ENCODE measurements at regions of chr4 and their contacts with region 1.

Region 1: DNA sequence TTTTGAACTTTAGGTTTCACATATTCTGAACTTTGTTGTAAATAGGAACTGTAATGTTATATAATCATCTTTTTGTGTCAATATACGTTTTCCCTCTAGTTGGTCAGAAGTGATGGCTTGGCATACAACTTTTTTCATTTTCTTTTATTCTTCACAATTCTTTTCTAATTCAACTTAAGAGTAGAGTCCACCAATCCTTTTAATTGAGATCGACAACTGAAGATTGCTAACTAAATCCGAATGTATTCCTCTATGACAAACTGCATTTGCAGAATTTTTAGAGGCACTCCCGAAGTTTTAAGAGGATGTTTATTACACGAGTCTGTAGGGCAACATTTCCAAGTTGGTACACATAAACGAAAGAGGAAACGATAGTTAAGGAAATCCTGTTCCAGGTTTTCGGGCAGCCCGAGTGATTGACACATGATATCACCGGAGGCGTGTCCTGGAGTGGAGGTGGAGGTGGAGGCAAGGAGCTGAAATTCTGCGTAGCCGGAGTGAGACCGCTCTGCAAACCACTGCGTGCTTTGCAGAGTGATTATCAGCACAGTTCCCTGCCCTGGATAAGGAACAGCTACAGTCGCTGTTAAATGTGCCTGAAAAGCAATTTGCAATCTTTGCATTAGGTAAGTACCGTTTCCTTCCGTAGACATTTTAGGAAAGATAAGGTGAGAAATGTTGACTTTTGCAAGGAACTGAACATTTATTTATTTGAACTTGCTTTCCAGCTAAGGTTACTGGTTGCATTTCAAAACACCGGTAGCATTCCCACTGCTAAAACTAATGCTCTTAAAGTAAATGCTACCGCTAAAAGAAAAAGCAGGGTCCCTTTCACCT is at the start of gene SPRY1:
- DNase-seq: peak; percentile 86
- H3K4me3 Mint-ChIP-seq: peak within 1 kb of the TSS; percentile 77
- H3K27ac Mint-ChIP-seq: peak within 1 kb of the TSS; percentile 42
- H3K4me1 Mint-ChIP-seq: peaks cover 26% of the 10 kb centered on the region
- H3K27me3 Mint-ChIP-seq: peaks cover 22% of the 10 kb centered on the region
- total RNA-seq, gene SPRY1: 11.1 to 14.0 TPM

Region 2: DNA sequence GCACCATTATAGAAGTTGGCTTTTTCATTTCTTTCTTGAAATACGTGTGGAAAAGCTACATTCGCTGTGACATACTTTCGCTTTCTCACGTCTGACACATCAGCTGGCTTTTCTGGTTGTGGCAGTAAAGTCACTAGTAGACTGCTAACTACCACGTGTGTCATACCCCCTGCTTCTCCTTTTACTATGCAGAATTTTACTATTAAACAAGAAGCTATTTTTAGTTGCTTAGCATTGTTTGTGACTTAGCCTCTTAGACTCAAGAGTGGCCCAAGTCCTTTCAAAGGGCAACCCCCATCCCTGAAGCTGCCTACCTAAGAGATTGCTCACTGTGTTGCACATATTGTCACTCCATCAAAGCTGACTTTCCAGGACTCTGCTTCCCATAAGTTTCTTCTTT is 937.9 kb before region 1 on chr4:
- CTCF ChIA-PET with region 1: no interaction called
- POLR2A ChIA-PET with region 1: no interaction called
- intact Hi-C with region 1: loop called (anchors 10 kb)
- DNase-seq: peak; percentile 75
- H3K4me3 Mint-ChIP-seq: peak overlapping the region; percentile 71
- H3K27ac Mint-ChIP-seq: peak overlapping the region; percentile 97
- H3K4me1 Mint-ChIP-seq: peaks cover 44% of the 10 kb centered on the region
- H3K27me3 Mint-ChIP-seq: no peaks in the 10 kb centered on the region

Region 3: DNA sequence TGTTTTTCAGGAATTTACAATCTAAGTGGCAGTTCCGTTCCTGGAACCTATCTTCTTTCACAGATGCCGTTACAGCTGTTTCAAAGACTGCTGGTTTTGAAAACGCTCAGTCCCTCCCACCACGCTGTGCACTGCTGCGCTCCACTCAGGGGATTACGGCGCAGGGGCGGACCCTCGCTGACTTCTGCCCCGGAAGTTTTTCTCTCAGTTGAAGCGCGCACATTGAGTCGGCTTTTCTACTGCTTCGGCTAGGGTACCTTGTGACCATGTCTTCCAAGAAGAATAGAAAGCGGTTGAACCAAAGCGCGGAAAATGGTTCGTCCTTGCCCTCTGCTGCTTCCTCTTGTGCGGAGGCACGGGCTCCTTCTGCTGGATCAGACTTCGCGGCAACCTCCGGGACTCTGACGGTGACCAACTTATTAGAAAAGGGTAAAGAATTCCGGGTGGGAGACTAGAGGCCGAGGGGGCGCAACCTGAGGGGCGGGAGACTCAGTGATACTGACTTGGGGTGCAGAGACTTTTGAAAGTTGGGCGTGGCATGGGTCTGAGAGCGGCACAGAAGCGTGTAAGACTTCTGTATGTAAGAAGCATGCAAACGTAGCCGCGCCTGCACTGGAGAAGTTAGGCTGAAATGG is 473.5 kb before region 1 on chr4:
- CTCF ChIA-PET with region 1: no interaction called
- POLR2A ChIA-PET with region 1: no interaction called
- intact Hi-C with region 1: loop called (anchors 5 kb)
- DNase-seq: peak; percentile 94
- H3K4me3 Mint-ChIP-seq: peak overlapping the region; percentile 94
- H3K27ac Mint-ChIP-seq: peak overlapping the region; percentile 90
- H3K4me1 Mint-ChIP-seq: peaks cover 11% of the 10 kb centered on the region
- H3K27me3 Mint-ChIP-seq: no peaks in the 10 kb centered on the region

Region 4: GRCh38 chr4:123361195-123361861 is 35.2 kb before region 1 on chr4:
- CTCF ChIA-PET with region 1: no interaction called
- POLR2A ChIA-PET with region 1: no interaction called
- intact Hi-C with region 1: no loop called
- DNase-seq: no peak
- H3K4me3 Mint-ChIP-seq: no peak overlapping the region
- H3K27ac Mint-ChIP-seq: no peak overlapping the region
- H3K4me1 Mint-ChIP-seq: no peaks in the 10 kb centered on the region
- H3K27me3 Mint-ChIP-seq: peaks cover 8% of the 10 kb centered on the region

Region 5: GRCh38 chr4:123444290-123444731 is 47.8 kb after region 1 on chr4:
- CTCF ChIA-PET with region 1: no interaction called
- POLR2A ChIA-PET with region 1: no interaction called
- intact Hi-C with region 1: loop called (anchors 1 kb)
- DNase-seq: peak; percentile 37
- H3K4me3 Mint-ChIP-seq: no peak overlapping the region
- H3K27ac Mint-ChIP-seq: peak overlapping the region; percentile 47
- H3K4me1 Mint-ChIP-seq: peaks cover 14% of the 10 kb centered on the region
- H3K27me3 Mint-ChIP-seq: peaks cover 6% of the 10 kb centered on the region

Region 6: DNA sequence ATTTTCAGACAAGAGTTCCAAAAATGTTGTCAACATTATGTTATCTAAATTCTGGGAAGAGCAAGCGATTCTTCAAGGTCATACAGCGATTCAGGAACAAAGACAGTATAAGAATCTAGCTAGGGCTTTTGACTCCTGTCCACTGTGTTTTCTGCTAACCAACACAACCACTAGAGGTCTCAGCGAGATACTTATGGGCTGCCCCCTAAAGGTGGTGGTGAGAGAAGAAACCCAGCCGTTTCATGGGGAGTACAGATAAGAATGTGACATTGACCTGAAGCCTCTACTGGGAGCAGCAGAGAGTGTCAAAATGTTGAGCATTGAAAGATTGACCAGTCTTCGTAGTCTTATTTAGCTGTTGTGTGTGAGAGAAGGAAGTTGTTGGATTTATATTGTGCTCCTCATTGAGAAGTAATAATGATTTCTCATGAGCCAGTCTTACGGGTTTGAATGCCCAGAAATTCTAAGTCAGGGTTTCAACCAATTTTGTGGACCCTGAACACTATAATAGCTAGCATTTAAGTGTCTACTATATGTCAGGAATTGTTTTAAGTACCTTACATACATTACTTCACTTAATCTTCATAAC is 168.3 kb after region 1 on chr4:
- CTCF ChIA-PET with region 1: interaction called, 9 read pairs
- POLR2A ChIA-PET with region 1: no interaction called
- intact Hi-C with region 1: loop called (anchors 2 kb)
- DNase-seq: peak; percentile 52
- H3K4me3 Mint-ChIP-seq: no peak overlapping the region
- H3K27ac Mint-ChIP-seq: no peak overlapping the region
- H3K4me1 Mint-ChIP-seq: no peaks in the 10 kb centered on the region
- H3K27me3 Mint-ChIP-seq: peaks cover 5% of the 10 kb centered on the region

Measured in activated CD4-positive, alpha-beta memory T cell treated with anti-CD3 and anti-CD28 coated beads for 36 hours (primary cell).